Dendritic cell treated with granulocyte-macrophage colony-stimulating factor and Interleukin-4, amounts not matched to agents 40 ng/mL and 50 ng/mL, for 4 days (primary cell): ENCODE measurements at regions of chr10 and their contacts with region 1.

Region 1: GRCh38 chr10:71638064-71638821 is 81.3 kb downstream of the C10orf105 start:
- H3K4me3 Mint-ChIP-seq: peak overlapping the region; percentile 39
- H3K27ac Mint-ChIP-seq: peak overlapping the region; percentile 70
- H3K4me1 Mint-ChIP-seq: peaks cover 57% of the 10 kb centered on the region
- H3K27me3 Mint-ChIP-seq: peaks cover 3% of the 10 kb centered on the region

Region 2: GRCh38 chr10:71671994-71672946 is 34.0 kb after region 1 on chr10:
- intact Hi-C with region 1: no loop called
- H3K4me3 Mint-ChIP-seq: no peak overlapping the region
- H3K27ac Mint-ChIP-seq: peak overlapping the region; percentile 51
- H3K4me1 Mint-ChIP-seq: peaks cover 28% of the 10 kb centered on the region
- H3K27me3 Mint-ChIP-seq: peaks cover 10% of the 10 kb centered on the region

Region 3: DNA sequence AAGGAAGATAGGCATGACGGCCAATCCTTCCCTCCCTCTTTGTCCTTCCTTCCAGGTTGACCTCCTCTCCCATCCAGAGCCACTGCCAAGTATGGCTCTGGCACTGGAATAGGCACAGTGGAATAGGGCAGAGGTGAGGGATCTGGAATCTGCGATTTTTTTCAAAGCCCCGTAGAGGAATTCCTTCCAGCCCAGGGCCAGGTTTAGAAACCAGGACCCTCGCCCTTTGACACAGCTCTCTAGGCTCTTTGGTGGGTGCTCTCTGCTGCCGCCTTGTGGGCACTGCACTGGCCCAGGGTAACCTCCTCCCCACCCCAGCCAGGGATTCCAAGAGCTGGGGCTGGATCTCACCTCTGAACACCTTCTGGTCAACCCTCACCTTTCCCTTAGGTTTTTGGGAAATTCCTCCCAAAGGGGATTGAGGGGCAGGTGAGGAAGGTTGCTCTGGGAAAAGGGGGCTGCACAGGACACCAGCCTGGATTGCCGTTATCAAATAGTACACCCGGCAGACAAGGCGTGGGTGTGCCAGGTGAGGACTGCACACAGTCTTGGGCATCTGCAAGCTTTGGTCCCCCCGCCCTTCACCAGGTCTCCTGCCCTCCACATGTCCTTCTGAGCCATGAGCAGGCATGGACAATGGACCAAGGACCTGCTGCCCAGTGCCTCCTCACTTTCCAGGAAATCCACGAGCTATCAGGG is 58.5 kb after region 1 on chr10:
- intact Hi-C with region 1: loop called (anchors 10 kb)
- H3K4me3 Mint-ChIP-seq: no peak overlapping the region
- H3K27ac Mint-ChIP-seq: peak overlapping the region; percentile 97
- H3K4me1 Mint-ChIP-seq: peaks cover 93% of the 10 kb centered on the region
- H3K27me3 Mint-ChIP-seq: no peaks in the 10 kb centered on the region